AG04450 (cell line): ENCODE measurements at regions of chr1 and their contacts with region 1.

Region 1: GRCh38 chr1:28235755-28236655 is at the start of gene ATP5IF1:
- DNase-seq: peak; percentile 96
- H3K4me3 ChIP-seq: peak within 1 kb of the TSS; percentile 100
- H3K27ac ChIP-seq: peak within 1 kb of the TSS; percentile 65
- H3K27me3 ChIP-seq: no peaks in the 10 kb centered on the region
- CTCF ChIP-seq: no peak
- polyA plus RNA-seq, gene ATP5IF1: 151 and 189 TPM in 2 replicates

Region 2: GRCh38 chr1:28259307-28260167 is 23.5 kb after region 1 on chr1 and contains the start of gene SESN2:
- CTCF ChIA-PET with region 1: no interaction called
- POLR2A ChIA-PET with region 1: interaction called, 14 read pairs
- DNase-seq: peak; percentile 95
- H3K4me3 ChIP-seq: peak within 1 kb of the TSS; percentile 93
- H3K27ac ChIP-seq: peak within 1 kb of the TSS; percentile 95
- H3K27me3 ChIP-seq: no peaks in the 10 kb centered on the region
- CTCF ChIP-seq: no peak
- polyA plus RNA-seq, gene SESN2: 27.5 and 31.9 TPM in 2 replicates

Region 3: DNA sequence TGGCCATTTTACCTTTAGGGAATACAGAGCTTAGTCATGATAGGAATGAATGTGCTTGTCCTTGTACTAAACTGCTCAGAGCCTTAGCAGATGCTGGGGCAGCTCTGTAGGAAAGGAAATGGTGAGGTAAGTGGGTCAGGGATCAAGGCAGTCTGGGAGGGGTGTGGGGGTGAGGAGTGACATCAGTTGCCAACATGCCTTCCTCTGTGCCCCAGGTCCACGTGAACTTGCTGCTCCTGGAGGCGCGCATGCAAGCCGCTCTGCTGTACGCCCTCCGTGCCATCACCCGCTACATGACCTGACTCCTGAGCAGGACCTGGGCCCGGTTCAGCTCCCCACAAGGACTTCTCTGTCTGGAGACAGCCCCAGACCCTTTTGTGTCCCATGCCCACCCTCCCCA is 44.5 kb after region 1 on chr1:
- CTCF ChIA-PET with region 1: no interaction called
- POLR2A ChIA-PET with region 1: no interaction called
- DNase-seq: no peak
- H3K4me3 ChIP-seq: no peak overlapping the region
- H3K27ac ChIP-seq: no peak overlapping the region
- H3K27me3 ChIP-seq: no peaks in the 10 kb centered on the region
- CTCF ChIP-seq: no peak

Region 4: GRCh38 chr1:28329395-28330153 is 93.6 kb after region 1 on chr1:
- CTCF ChIA-PET with region 1: no interaction called
- POLR2A ChIA-PET with region 1: interaction called, 14 read pairs
- DNase-seq: no peak
- H3K4me3 ChIP-seq: peak overlapping the region; percentile 85
- H3K27ac ChIP-seq: peak overlapping the region; percentile 86
- H3K27me3 ChIP-seq: no peaks in the 10 kb centered on the region
- CTCF ChIP-seq: 0 out of 2 replicates have a peak, but pooled peaks have one; percentile 13